PC-9 (cell line): ENCODE measurements at regions of chr2 and their contacts with region 1.

Region 1: DNA sequence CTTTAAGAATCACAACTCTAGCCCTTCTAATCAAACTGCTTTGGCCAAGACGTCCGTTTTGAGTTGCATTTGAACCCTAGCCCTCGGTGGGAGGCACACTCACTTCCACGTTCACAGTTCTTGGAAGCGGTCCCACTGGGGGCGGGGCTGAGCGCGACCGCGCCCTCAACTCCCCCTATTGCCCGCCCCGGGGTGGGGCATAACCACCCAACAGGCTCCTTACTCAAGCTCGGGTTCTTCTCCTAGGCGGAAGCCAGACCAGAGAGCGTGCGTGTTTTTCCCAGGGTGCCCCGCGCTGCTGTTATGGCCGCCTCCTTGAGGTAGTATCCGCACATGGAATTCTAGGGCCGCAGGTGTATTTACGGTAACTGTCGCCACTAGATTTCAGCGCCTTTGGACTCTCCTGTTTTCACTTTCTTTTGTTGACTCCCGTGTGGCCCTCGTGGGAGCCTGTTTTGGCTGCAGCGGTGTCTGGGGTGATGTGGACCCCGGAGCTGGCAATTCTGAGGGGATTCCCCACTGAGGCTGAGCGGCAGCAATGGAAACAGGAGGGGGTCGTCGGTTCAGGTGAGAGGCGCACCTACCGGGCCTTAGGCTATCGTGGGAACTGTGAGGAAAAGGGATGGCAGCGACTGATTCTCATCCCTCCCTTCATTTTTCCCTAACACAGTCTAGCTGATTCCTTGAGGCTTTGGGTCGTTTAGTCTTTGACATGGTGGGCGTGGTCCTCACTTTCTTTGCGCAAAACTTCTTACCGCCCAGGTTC is at the start of gene TTC27:
- DNase-seq: peak; percentile 90 to 91
- H3K4me3 ChIP-seq: peak within 1 kb of the TSS; percentile 69
- H3K27ac ChIP-seq: peak within 1 kb of the TSS; percentile 36; the same call in 1 of the 2 replicates
- H3K4me1 ChIP-seq: peaks cover 13% of the 10 kb centered on the region
- H3K27me3 ChIP-seq: no peaks in the 10 kb centered on the region
- CTCF ChIP-seq: peak; percentile 41; the same call in 1 of the 2 replicates
- total RNA-seq, gene TTC27: 12.0 and 12.8 TPM in 2 replicates

Region 2: GRCh38 chr2:32553829-32554432 is 74.1 kb before region 1 on chr2:
- CTCF ChIA-PET with region 1: no interaction called
- POLR2A ChIA-PET with region 1: no interaction called
- intact Hi-C with region 1: no loop called
- DNase-seq: no peak
- H3K4me3 ChIP-seq: no peak overlapping the region
- H3K27ac ChIP-seq: no peak overlapping the region
- H3K4me1 ChIP-seq: no peaks in the 10 kb centered on the region
- H3K27me3 ChIP-seq: no peaks in the 10 kb centered on the region
- CTCF ChIP-seq: peak; percentile 85

Region 3: DNA sequence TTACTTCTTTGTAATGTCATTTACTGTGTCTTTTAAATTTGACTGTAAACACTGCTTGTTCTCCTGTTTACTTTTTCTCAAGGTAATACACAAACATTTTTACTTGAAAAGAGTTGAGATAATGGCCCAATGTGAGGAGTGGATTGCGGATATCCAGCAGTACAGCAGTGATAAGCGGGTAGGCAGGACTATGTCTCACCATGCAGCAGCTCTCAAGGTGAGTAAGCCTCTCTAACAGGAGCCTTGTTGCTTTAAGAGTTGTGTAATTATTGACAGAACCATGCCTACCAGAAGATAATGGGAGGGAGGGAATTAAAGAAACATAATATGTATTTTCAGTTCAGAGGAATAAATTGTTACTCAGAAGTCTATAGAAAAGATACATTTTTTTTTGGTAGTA is 16.6 kb before region 1 on chr2:
- CTCF ChIA-PET with region 1: no interaction called
- POLR2A ChIA-PET with region 1: no interaction called
- intact Hi-C with region 1: no loop called
- DNase-seq: no peak
- H3K4me3 ChIP-seq: no peak overlapping the region
- H3K27ac ChIP-seq: no peak overlapping the region
- H3K4me1 ChIP-seq: no peaks in the 10 kb centered on the region
- H3K27me3 ChIP-seq: no peaks in the 10 kb centered on the region
- CTCF ChIP-seq: no peak

Region 4: GRCh38 chr2:32671885-32672533 is 44.0 kb after region 1 on chr2:
- CTCF ChIA-PET with region 1: no interaction called
- POLR2A ChIA-PET with region 1: no interaction called
- intact Hi-C with region 1: no loop called
- DNase-seq: no peak
- H3K4me3 ChIP-seq: no peak overlapping the region
- H3K27ac ChIP-seq: no peak overlapping the region
- H3K4me1 ChIP-seq: no peaks in the 10 kb centered on the region
- H3K27me3 ChIP-seq: no peaks in the 10 kb centered on the region
- CTCF ChIP-seq: no peak

Region 5: GRCh38 chr2:32825291-32825712 is 197.3 kb after region 1 on chr2:
- CTCF ChIA-PET with region 1: no interaction called
- POLR2A ChIA-PET with region 1: no interaction called
- intact Hi-C with region 1: no loop called
- DNase-seq: no peak
- H3K4me3 ChIP-seq: no peak overlapping the region
- H3K27ac ChIP-seq: no peak overlapping the region
- H3K4me1 ChIP-seq: no peaks in the 10 kb centered on the region
- H3K27me3 ChIP-seq: no peaks in the 10 kb centered on the region
- CTCF ChIP-seq: no peak

Region 6: DNA sequence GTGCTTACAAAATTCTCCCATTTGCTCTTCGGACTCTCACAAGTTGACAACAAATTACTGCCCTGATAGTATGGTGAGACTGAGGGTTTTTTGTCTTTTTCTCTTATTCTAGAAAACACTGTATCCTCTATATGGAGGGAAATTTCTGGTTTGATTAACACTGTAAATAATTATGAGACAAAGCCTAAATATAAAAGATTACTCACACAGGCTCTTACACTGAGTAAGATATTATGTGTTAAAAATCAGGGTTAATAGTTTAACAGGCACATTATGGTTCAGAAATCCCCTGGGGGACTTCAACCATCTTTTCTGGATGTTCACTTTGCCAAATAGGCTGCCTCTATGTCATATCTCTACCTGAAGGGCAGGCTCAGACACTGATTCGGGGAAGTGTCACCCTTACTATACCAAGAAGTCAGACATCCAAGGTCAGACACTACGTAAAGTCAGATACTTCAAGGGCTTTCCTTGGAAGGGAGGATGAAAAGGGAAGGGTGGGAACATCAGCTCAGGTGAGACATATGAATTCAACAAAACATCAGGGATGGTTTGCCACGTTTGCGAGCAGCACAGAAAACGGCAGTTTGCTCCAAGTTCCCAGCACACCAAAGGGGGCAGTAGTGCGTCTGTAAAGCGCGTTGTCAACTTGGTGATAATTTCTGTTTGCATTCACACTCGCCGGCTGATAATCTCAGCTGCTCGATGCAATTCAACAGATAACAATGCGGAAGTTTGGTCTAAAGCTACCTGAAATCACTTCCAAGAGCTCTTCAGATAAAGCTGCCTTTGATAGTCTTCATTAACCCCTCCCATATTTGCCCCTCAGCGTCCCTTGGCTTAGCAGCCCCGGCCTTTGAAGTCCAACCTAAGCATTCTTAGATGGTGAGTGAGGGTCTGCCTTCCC is 847.5 kb after region 1 on chr2:
- CTCF ChIA-PET with region 1: no interaction called
- POLR2A ChIA-PET with region 1: no interaction called
- intact Hi-C with region 1: loop called (anchors 10 kb)
- DNase-seq: peak; percentile 69 to 92
- H3K4me3 ChIP-seq: peak overlapping the region; percentile 72
- H3K27ac ChIP-seq: peak overlapping the region; percentile 75
- H3K4me1 ChIP-seq: peaks cover 15% of the 10 kb centered on the region
- H3K27me3 ChIP-seq: no peaks in the 10 kb centered on the region
- CTCF ChIP-seq: peak; percentile 88